CD8-positive, alpha-beta T cell (primary cell): ENCODE measurements at regions of chr1 and their contacts with region 1.

Region 1: GRCh38 chr1:185317034-185317885 is at the start of gene IVNS1ABP:
- DNase-seq: peak; percentile 91 to 99 (median 94)
- ATAC-seq: peak; percentile 72
- H3K4me3 ChIP-seq: peak within 1 kb of the TSS; percentile 92 to 97
- H3K4me3 Mint-ChIP-seq: peak within 1 kb of the TSS; percentile 97
- H3K27ac ChIP-seq: peak within 1 kb of the TSS; percentile 97
- H3K27ac Mint-ChIP-seq: peak within 1 kb of the TSS; percentile 99
- H3K4me1 ChIP-seq: peaks cover 38% of the 10 kb centered on the region
- H3K4me1 Mint-ChIP-seq: peaks cover 49% of the 10 kb centered on the region
- H3K27me3 ChIP-seq: no peaks in the 10 kb centered on the region
- H3K27me3 Mint-ChIP-seq: no peaks in the 10 kb centered on the region
- CTCF ChIP-seq: no peak
- total RNA-seq, gene IVNS1ABP: 227 to 237 TPM

Region 2: GRCh38 chr1:183471743-183472487 is 1845.3 kb before region 1 on chr1:
- CTCF ChIA-PET with region 1: no interaction called
- POLR2A ChIA-PET with region 1: no interaction called
- intact Hi-C with region 1: loop called in 1 of 2 experiments (anchors 2 kb)
- DNase-seq: peak; percentile 92 to 98 (median 96)
- ATAC-seq: peak; percentile 65
- H3K4me3 ChIP-seq: peak overlapping the region; percentile 83 to 86
- H3K4me3 Mint-ChIP-seq: peak overlapping the region; percentile 98
- H3K27ac ChIP-seq: peak overlapping the region; percentile 90 to 97
- H3K27ac Mint-ChIP-seq: peak overlapping the region; percentile 99
- H3K4me1 ChIP-seq: peaks cover 32% of the 10 kb centered on the region
- H3K4me1 Mint-ChIP-seq: peaks cover 24% of the 10 kb centered on the region
- H3K27me3 ChIP-seq: no peaks in the 10 kb centered on the region
- H3K27me3 Mint-ChIP-seq: no peaks in the 10 kb centered on the region
- CTCF ChIP-seq: no peak

Region 3: GRCh38 chr1:185044981-185045813 is 272.1 kb before region 1 on chr1 and contains the start of gene RNF2:
- CTCF ChIA-PET with region 1: no interaction called
- POLR2A ChIA-PET with region 1: interaction called, 8 read pairs
- intact Hi-C with region 1: loop called (anchors 1 to 10 kb)
- DNase-seq: peak; percentile 61 to 95 (median 84)
- ATAC-seq: peak; percentile 91
- H3K4me3 ChIP-seq: peak within 1 kb of the TSS; percentile 74 to 85
- H3K4me3 Mint-ChIP-seq: peak within 1 kb of the TSS; percentile 92
- H3K27ac ChIP-seq: peak within 1 kb of the TSS; percentile 62 to 81
- H3K27ac Mint-ChIP-seq: peak within 1 kb of the TSS; percentile 93
- H3K4me1 ChIP-seq: peaks cover 23% of the 10 kb centered on the region
- H3K4me1 Mint-ChIP-seq: peaks cover 46% of the 10 kb centered on the region
- H3K27me3 ChIP-seq: no peaks in the 10 kb centered on the region
- H3K27me3 Mint-ChIP-seq: no peaks in the 10 kb centered on the region
- CTCF ChIP-seq: no peak
- total RNA-seq, gene RNF2: 13.3 to 13.6 TPM

Region 4: DNA sequence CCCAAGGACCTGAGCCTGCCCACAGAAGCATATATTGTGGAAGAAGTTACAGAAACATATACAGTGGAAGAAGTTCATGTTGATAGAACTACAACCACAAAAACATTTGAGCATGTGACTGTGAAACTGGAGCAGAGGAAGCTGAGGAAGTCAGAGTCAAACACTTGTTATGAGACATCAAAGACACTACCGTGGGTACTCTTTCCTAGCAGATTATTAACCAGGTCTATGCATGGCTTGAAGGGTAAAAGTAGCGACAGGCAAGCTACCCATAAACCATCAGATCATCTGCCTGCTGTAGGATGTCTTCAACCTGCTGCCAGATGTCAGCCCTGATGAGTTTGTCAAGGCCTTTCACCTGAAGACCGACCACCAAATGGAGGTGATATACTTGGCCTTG is 36.0 kb before region 1 on chr1:
- CTCF ChIA-PET with region 1: interaction called, 7 read pairs
- POLR2A ChIA-PET with region 1: interaction called, 45 read pairs
- intact Hi-C with region 1: loop called in 1 of 2 experiments (anchors 2 kb)
- DNase-seq: peak in 7 of 9 experiments; percentile 12 to 72 (median 36)
- ATAC-seq: peak; percentile 92
- H3K4me3 ChIP-seq: no peak overlapping the region
- H3K4me3 Mint-ChIP-seq: peak overlapping the region; percentile 72
- H3K27ac ChIP-seq: peak overlapping the region; percentile 7 to 63
- H3K27ac Mint-ChIP-seq: peak overlapping the region; percentile 96
- H3K4me1 ChIP-seq: peaks cover 47% of the 10 kb centered on the region
- H3K4me1 Mint-ChIP-seq: peaks cover 64% of the 10 kb centered on the region
- H3K27me3 ChIP-seq: no peaks in the 10 kb centered on the region
- H3K27me3 Mint-ChIP-seq: no peaks in the 10 kb centered on the region
- CTCF ChIP-seq: no peak

Region 5: GRCh38 chr1:185439727-185440415 is 122.6 kb after region 1 on chr1:
- CTCF ChIA-PET with region 1: no interaction called
- POLR2A ChIA-PET with region 1: no interaction called
- intact Hi-C with region 1: loop called in 1 of 2 experiments (anchors 5 kb)
- DNase-seq: peak in 3 of 9 experiments; percentile 14 to 81 (median 52)
- ATAC-seq: peak; percentile 80
- H3K4me3 ChIP-seq: no peak overlapping the region
- H3K4me3 Mint-ChIP-seq: no peak overlapping the region
- H3K27ac ChIP-seq: peak overlapping the region; percentile 2 to 85
- H3K27ac Mint-ChIP-seq: no peak overlapping the region
- H3K4me1 ChIP-seq: peaks cover 13% of the 10 kb centered on the region
- H3K4me1 Mint-ChIP-seq: peaks cover 4% of the 10 kb centered on the region
- H3K27me3 ChIP-seq: no peaks in the 10 kb centered on the region
- H3K27me3 Mint-ChIP-seq: no peaks in the 10 kb centered on the region
- CTCF ChIP-seq: no peak

Region 6: GRCh38 chr1:185670187-185670627 is 352.9 kb after region 1 on chr1:
- CTCF ChIA-PET with region 1: interaction called, 25 read pairs
- POLR2A ChIA-PET with region 1: interaction called, 20 read pairs
- intact Hi-C with region 1: loop called (anchors 1 to 2 kb)
- DNase-seq: peak; percentile 12 to 78 (median 63)
- ATAC-seq: peak; percentile 81
- H3K4me3 ChIP-seq: no peak overlapping the region
- H3K4me3 Mint-ChIP-seq: no peak overlapping the region
- H3K27ac ChIP-seq: no peak overlapping the region
- H3K27ac Mint-ChIP-seq: peak overlapping the region; percentile 78
- H3K4me1 ChIP-seq: peaks cover 14% of the 10 kb centered on the region
- H3K4me1 Mint-ChIP-seq: peaks cover 39% of the 10 kb centered on the region
- H3K27me3 ChIP-seq: no peaks in the 10 kb centered on the region
- H3K27me3 Mint-ChIP-seq: no peaks in the 10 kb centered on the region
- CTCF ChIP-seq: peak; percentile 69

Region 7: GRCh38 chr1:186375088-186375953 is 1058.1 kb after region 1 on chr1 and contains the starts of genes ODR4 and TPR:
- CTCF ChIA-PET with region 1: no interaction called
- POLR2A ChIA-PET with region 1: interaction called, 3 read pairs
- intact Hi-C with region 1: loop called in 1 of 2 experiments (anchors 1 kb)
- DNase-seq: peak; percentile 91 to 99 (median 95)
- ATAC-seq: peak; percentile 89
- H3K4me3 ChIP-seq: peak within 1 kb of the TSS; percentile 65 to 82
- H3K4me3 Mint-ChIP-seq: peak within 1 kb of the TSS; percentile 98
- H3K27ac ChIP-seq: peak within 1 kb of the TSS; percentile 92 to 96
- H3K27ac Mint-ChIP-seq: peak within 1 kb of the TSS; percentile 97
- H3K4me1 ChIP-seq: peaks cover 24% of the 10 kb centered on the region
- H3K4me1 Mint-ChIP-seq: peaks cover 43% of the 10 kb centered on the region
- H3K27me3 ChIP-seq: no peaks in the 10 kb centered on the region
- H3K27me3 Mint-ChIP-seq: no peaks in the 10 kb centered on the region
- CTCF ChIP-seq: peak; percentile 66
- total RNA-seq, gene ODR4: 25.4 to 28.7 TPM
- total RNA-seq, gene TPR: 89.3 to 98.0 TPM